Activated CD4-positive, alpha-beta T cell treated with anti-CD3 and anti-CD28 coated beads, Interleukin-2, amount 10 ng/mL, durations not matched to agents 24 days and 14 days (primary cell): ENCODE measurements at regions of chr5 and their contacts with region 1.

Region 1: GRCh38 chr5:14706615-14707021 is 42.1 kb downstream of the OTULIN start:
- DNase-seq: peak; percentile 87
- H3K4me3 Mint-ChIP-seq: peak overlapping the region; percentile 82
- H3K27ac Mint-ChIP-seq: peak overlapping the region; percentile 99
- H3K4me1 Mint-ChIP-seq: peaks cover 69% of the 10 kb centered on the region
- H3K27me3 Mint-ChIP-seq: no peaks in the 10 kb centered on the region

Region 2: DNA sequence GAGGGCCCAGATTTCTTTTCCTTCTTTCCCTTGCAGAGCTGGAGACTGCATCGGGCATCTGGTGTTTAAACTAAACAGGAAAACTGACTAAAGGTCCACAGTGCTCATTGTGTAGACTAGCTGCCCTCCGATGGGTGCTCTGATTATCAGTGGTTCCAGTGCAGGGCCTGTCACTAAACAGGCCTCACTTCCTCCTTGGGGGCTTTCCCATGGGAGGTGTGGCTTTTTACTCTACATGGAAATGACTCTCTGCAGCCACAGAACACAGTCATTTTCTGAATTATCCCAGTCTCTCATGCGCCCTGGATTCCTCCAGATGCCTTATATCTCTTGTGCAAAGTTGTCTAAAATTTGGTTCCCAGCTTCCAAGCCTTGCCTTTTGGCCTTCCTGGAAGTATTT is 364.3 kb before region 1 on chr5:
- intact Hi-C with region 1: no loop called
- DNase-seq: no peak
- H3K4me3 Mint-ChIP-seq: no peak overlapping the region
- H3K27ac Mint-ChIP-seq: no peak overlapping the region
- H3K4me1 Mint-ChIP-seq: peaks cover 3% of the 10 kb centered on the region
- H3K27me3 Mint-ChIP-seq: no peaks in the 10 kb centered on the region

Region 3: DNA sequence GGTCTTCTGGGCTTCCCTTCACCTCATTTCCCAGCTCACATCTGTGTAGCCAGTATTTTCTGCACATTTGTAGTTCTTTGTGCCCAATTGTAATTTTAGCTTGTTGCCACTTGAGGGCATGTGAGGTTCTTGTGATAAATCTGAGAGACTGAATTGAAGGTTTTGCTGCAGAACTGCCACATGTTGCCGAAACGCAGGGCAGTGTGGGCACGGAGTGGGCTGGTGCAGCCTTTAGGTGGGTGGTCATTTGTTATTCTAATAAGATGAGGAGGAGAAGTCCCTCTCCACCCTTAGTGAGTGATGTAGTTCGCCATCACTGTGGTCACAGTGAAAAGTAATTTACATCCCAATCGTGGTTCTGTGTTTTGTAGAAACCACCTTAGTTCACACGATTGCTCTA is 20.9 kb before region 1 on chr5:
- intact Hi-C with region 1: loop called (anchors 1 kb)
- DNase-seq: peak; percentile 83
- H3K4me3 Mint-ChIP-seq: no peak overlapping the region
- H3K27ac Mint-ChIP-seq: peak overlapping the region; percentile 42
- H3K4me1 Mint-ChIP-seq: peaks cover 15% of the 10 kb centered on the region
- H3K27me3 Mint-ChIP-seq: no peaks in the 10 kb centered on the region